T-cell (primary cell): ENCODE measurements at regions of chr11 and their contacts with region 1.

Region 1: DNA sequence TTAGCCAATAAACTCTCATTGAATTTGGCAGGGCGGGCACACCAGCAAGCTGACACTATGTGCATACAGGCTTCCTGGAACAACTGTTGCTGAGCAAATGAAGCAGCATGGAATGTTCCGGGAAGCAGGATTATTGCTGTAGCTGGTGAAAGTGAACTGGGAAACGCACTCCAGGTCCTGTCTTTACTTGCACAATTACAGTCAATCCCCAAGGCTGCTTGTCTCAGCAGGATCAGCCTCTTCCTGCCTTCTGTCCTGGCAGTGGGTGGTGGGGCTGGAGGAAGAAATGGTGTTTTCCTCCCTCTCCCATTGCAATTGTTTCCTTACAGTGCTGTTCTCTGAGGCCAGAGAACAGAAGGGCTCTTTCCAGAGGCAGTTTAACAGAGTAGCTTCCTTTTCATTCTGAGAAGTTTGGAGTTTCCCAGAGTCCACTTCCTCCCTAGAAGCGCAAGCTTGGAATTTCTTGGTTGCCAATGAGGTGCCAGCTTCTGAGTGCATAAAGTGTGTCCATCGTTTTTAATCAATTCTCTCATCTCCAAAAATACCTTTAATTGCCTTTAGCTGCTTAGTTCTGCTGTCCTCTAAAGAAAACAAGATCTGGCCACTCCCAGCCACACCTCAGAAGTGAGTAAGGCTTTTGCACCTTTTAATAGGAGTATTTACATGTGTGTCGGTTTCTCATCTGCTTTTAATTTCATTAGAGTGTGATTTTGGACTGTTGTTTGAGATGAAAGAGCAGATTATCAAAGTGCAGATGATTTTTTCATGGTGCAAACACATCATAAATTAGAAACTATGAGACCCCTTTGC is 19.9 kb downstream of the CD44 start:
- DNase-seq: no peak
- ATAC-seq: no peak
- H3K4me3 ChIP-seq: no peak overlapping the region
- H3K4me3 Mint-ChIP-seq: peak overlapping the region; percentile 29 to 69 (median 61)
- H3K27ac ChIP-seq: peak overlapping the region; percentile 99
- H3K27ac Mint-ChIP-seq: peak overlapping the region; percentile 100
- H3K4me1 ChIP-seq: peaks cover 87 to 98% of the 10 kb centered on the region in 2 experiments
- H3K4me1 Mint-ChIP-seq: peaks cover 100% of the 10 kb centered on the region in 3 donors
- H3K27me3 ChIP-seq: no peaks in the 10 kb centered on the region
- H3K27me3 Mint-ChIP-seq: no peaks in the 10 kb centered on the region

Region 2: DNA sequence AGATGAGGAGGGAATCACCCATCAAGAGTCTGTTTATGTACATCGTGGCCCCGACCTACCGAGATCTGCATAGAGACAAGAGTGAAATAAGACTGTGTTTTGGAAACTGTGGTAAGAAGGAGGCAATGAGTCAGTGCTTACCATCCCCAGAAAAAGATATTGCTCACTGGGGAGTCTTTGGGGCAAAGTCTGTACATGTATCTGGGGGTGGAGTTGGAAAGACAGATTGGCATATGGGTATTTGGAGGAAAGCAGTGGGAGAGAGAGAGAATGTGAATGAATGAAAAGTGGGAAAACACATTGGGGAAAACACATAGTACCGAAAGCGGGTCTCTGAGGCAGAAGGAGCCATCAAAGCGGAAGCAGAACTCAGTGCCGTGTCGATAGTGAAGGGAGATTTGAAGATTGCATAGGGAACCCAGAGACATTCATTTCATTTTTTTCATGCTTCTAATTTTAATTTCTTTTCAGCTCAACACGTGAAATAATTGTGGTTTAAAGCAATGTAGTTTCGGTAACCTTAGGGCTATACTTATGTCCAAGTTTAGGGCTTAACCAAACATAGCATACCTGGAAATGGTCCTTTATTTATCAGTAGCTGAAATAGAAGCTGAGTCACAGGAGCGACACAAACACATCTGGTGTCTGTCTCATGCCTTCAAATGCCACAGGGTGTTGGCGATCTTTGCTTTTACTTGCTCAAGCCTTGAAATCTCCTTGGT is 118.5 kb before region 1 on chr11:
- CTCF ChIA-PET with region 1: interaction called in 1 of 2 experiments, 3 read pairs
- POLR2A ChIA-PET with region 1: interaction called in 1 of 2 experiments, 10 read pairs
- DNase-seq: peak in 33 of 35 experiments; percentile 36 to 85 (median 50)
- ATAC-seq: peak; percentile 86 to 89 (median 88)
- H3K4me3 ChIP-seq: peak overlapping the region; percentile 51 to 53
- H3K4me3 Mint-ChIP-seq: peak overlapping the region; percentile 78 to 86 (median 80)
- H3K27ac ChIP-seq: peak overlapping the region; percentile 97
- H3K27ac Mint-ChIP-seq: peak overlapping the region; percentile 95 to 99
- H3K4me1 ChIP-seq: peaks cover 27 to 58% of the 10 kb centered on the region in 2 experiments
- H3K4me1 Mint-ChIP-seq: peaks cover 54 to 82% (median 69%) of the 10 kb centered on the region in 3 donors
- H3K27me3 ChIP-seq: no peaks in the 10 kb centered on the region
- H3K27me3 Mint-ChIP-seq: no peaks in the 10 kb centered on the region

Region 3: DNA sequence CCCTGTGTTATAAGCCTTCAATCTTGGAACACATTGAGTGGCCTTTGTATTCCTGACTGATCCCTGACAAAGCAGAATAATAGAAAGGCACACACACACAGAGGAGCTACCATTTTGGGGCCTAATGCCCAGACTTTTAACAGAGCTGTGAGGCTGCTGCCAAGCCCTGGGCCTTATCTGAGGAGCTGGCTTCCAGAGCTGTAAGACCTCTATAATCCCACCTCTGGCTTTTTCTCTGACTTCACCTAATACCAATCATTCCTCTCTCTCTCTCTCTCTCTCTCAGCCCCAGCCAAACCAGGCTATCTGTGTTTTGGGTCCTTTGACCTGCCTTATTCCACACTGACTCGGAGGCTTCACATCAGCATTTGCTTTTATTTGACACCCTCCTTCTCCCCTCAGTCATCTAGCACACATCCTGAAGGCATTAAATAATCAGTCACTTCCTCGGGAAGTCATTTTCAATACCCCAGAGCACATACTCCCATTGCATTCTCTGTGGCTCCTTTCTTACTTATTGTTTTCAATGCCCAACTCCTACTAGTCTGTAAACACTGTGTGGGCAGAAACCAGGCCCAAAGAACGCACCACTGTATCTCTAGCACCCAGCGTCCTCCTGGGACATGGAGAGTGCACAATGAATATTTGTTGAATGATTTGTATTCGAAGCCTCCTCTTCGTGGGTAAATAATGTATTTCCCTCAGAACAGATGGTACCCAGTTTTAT is 482.4 kb after region 1 on chr11:
- CTCF ChIA-PET with region 1: no interaction called
- POLR2A ChIA-PET with region 1: no interaction called
- DNase-seq: no peak
- ATAC-seq: no peak
- H3K4me3 ChIP-seq: no peak overlapping the region
- H3K4me3 Mint-ChIP-seq: no peak overlapping the region
- H3K27ac ChIP-seq: no peak overlapping the region
- H3K27ac Mint-ChIP-seq: no peak overlapping the region
- H3K4me1 ChIP-seq: no peaks in the 10 kb centered on the region
- H3K4me1 Mint-ChIP-seq: no peaks in the 10 kb centered on the region
- H3K27me3 ChIP-seq: no peaks in the 10 kb centered on the region
- H3K27me3 Mint-ChIP-seq: peaks cover 9 to 18% of the 10 kb centered on the region in 2 donors